ENCODE measurements at regions of chr3 and their contacts with region 1.

Region 1: GRCh38 chr3:123272547-123272946 is 70.8 kb downstream of the SEC22A start:
- DNase-seq: no peak
- H3K4me3 ChIP-seq: no peak overlapping the region
- CTCF ChIP-seq: no peak

Region 2: DNA sequence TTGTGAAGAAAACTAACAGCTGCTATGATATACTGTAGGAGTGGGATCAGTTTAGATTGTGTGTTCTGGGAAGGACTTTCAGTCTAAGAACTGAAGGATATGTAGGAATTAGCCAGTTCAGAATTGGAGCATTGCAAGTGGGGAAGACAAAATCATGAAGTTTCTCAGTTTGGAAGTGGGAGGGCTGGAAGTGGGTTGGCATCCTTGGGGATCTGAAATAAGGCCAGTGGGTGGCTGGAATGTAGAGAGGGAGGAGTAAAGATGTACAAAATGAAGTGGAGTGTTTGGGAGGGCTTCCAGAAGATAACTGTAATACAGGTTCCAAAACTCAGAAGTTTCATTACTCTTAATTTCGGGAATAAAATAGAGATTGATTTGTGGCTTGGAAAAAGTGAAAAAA is 53.6 kb before region 1 on chr3:
- CTCF ChIA-PET with region 1: no interaction called
- POLR2A ChIA-PET with region 1: no interaction called
- DNase-seq: no peak
- H3K4me3 ChIP-seq: no peak overlapping the region
- CTCF ChIP-seq: no peak

Region 3: GRCh38 chr3:123286308-123287023 is 13.9 kb after region 1 on chr3:
- CTCF ChIA-PET with region 1: interaction called, 24 read pairs
- POLR2A ChIA-PET with region 1: no interaction called
- DNase-seq: no peak
- H3K4me3 ChIP-seq: no peak overlapping the region
- CTCF ChIP-seq: peak; percentile 96